Activated CD4-positive, alpha-beta memory T cell treated with anti-CD3 and anti-CD28 coated beads, Interleukin-2, amount 10 ng/mL, durations not matched to agents 7 days and 5 days (primary cell): ENCODE measurements at regions of chr6 and their contacts with region 1.

Region 1: GRCh38 chr6:42367353-42368011 is 84.2 kb downstream of the TRERF1 start:
- DNase-seq: peak; percentile 48
- H3K4me3 Mint-ChIP-seq: peak overlapping the region; percentile 66
- H3K27ac Mint-ChIP-seq: peak overlapping the region; percentile 96
- H3K4me1 Mint-ChIP-seq: peaks cover 74% of the 10 kb centered on the region
- H3K27me3 Mint-ChIP-seq: no peaks in the 10 kb centered on the region

Region 2: DNA sequence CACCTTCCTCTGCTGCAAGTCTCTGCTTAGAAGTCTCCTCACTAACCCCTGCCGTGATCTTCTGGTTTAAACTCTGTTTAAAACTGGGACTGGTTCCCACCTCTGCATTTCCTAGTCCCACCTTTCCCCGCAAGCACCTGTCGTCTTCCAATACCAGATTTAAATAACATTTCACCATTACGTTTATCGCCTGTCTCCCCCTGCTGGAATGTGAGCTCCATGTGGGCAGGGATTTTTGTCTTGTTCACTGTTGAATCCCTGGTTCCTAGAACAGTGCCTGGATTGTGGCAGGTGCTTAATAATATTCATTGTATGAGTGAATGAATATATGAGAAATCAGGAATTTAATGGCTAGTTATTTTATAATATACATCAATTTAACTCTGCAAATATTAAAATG is 191.6 kb before region 1 on chr6:
- CTCF ChIA-PET with region 1: no interaction called
- POLR2A ChIA-PET with region 1: no interaction called
- DNase-seq: no peak
- H3K4me3 Mint-ChIP-seq: no peak overlapping the region
- H3K27ac Mint-ChIP-seq: no peak overlapping the region
- H3K4me1 Mint-ChIP-seq: no peaks in the 10 kb centered on the region
- H3K27me3 Mint-ChIP-seq: no peaks in the 10 kb centered on the region

Region 3: GRCh38 chr6:42269553-42269952 is 97.9 kb before region 1 on chr6:
- CTCF ChIA-PET with region 1: no interaction called
- POLR2A ChIA-PET with region 1: no interaction called
- DNase-seq: peak; percentile 33
- H3K4me3 Mint-ChIP-seq: no peak overlapping the region
- H3K27ac Mint-ChIP-seq: peak overlapping the region; percentile 8
- H3K4me1 Mint-ChIP-seq: peaks cover 12% of the 10 kb centered on the region
- H3K27me3 Mint-ChIP-seq: no peaks in the 10 kb centered on the region

Region 4: DNA sequence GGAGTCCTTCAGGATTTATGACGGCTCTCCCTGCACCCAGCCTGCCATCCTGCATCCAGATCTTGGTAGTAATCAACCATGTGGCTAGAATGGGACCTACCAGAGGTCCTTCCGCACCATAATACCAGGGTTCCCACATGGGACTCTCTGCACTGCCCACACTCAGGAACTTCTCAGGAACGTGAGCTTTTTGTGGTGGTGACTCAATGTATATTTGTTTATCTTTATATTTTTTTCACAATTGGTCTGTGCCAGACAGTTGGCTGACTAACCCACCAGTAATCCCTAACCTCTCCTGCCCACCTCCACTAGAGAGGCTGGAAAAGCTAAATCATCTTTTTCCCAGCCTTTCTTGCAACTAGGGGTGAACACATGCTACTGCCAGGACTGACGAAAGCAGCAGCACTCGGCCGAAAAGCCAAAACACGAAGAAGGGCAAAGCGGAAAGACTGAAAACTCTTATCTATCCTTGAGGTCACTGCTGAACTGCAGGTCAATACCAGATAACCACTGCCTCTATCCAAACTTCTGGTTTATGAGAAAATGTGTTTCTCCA is 28.7 kb before region 1 on chr6:
- CTCF ChIA-PET with region 1: interaction called, 3 read pairs
- POLR2A ChIA-PET with region 1: interaction called, 17 read pairs
- DNase-seq: no peak
- H3K4me3 Mint-ChIP-seq: no peak overlapping the region
- H3K27ac Mint-ChIP-seq: peak overlapping the region; percentile 21
- H3K4me1 Mint-ChIP-seq: peaks cover 71% of the 10 kb centered on the region
- H3K27me3 Mint-ChIP-seq: no peaks in the 10 kb centered on the region

Region 5: GRCh38 chr6:42383421-42384205 is 16.1 kb after region 1 on chr6:
- CTCF ChIA-PET with region 1: interaction called, 11 read pairs
- POLR2A ChIA-PET with region 1: interaction called, 67 read pairs
- DNase-seq: no peak
- H3K4me3 Mint-ChIP-seq: peak overlapping the region; percentile 26
- H3K27ac Mint-ChIP-seq: peak overlapping the region; percentile 61
- H3K4me1 Mint-ChIP-seq: peaks cover 94% of the 10 kb centered on the region
- H3K27me3 Mint-ChIP-seq: no peaks in the 10 kb centered on the region